Tibial artery (tissue), 4 donors: ENCODE measurements at regions of chr10 and their contacts with region 1.

Region 1: GRCh38 chr10:71812016-71812912 is 38.8 kb downstream of the PSAP start:
- DNase-seq: peak in 1 of 2 donors; percentile 77
- H3K4me3 ChIP-seq: no peak overlapping the region
- H3K27ac ChIP-seq: no peak overlapping the region
- H3K4me1 ChIP-seq: no peaks in the 10 kb centered on the region
- H3K27me3 ChIP-seq: peaks cover 0 to 5% of the 10 kb centered on the region in 2 donors
- CTCF ChIP-seq: peak; percentile 87

Region 2: DNA sequence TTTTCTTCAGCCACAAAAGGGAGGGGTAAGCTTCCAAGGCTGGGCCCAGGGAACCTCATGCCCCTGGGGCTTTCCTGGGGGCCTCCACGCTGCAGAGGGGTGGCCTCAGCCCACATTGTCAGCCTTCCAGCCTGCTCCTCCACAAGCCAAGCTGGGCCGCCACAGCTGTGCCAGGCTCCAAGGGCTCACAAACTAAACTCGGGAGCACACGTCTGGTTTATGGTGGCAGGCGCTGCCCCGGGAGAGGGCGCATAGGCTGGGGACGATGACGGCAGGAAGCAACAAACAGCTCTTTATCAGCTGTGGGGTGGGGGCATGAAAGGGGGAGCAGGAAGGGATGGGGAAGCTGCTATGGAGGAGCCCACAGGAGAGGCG is 421.8 kb before region 1 on chr10:
- intact Hi-C with region 1: loop called (anchors 5 kb)
- DNase-seq: no peak
- H3K4me3 ChIP-seq: no peak overlapping the region
- H3K27ac ChIP-seq: no peak overlapping the region
- H3K4me1 ChIP-seq: no peaks in the 10 kb centered on the region
- H3K27me3 ChIP-seq: peaks cover 0 to 24% of the 10 kb centered on the region in 2 donors
- CTCF ChIP-seq: no peak

Region 3: GRCh38 chr10:71696628-71697326 is 115.5 kb before region 1 on chr10:
- intact Hi-C with region 1: loop called (anchors 5 kb)
- DNase-seq: peak in 1 of 2 donors; percentile 48
- H3K4me3 ChIP-seq: no peak overlapping the region
- H3K27ac ChIP-seq: no peak overlapping the region
- H3K4me1 ChIP-seq: no peaks in the 10 kb centered on the region
- H3K27me3 ChIP-seq: peaks cover 0 to 9% of the 10 kb centered on the region in 2 donors
- CTCF ChIP-seq: peak; percentile 62 to 77

Region 4: GRCh38 chr10:71727738-71728737 is 84.2 kb before region 1 on chr10:
- intact Hi-C with region 1: no loop called
- DNase-seq: peak in 1 of 2 donors; percentile 61
- H3K4me3 ChIP-seq: no peak overlapping the region
- H3K27ac ChIP-seq: peak overlapping the region; percentile 55 to 69
- H3K4me1 ChIP-seq: peaks cover 0 to 35% (median 27%) of the 10 kb centered on the region in 4 donors
- H3K27me3 ChIP-seq: no peaks in the 10 kb centered on the region
- CTCF ChIP-seq: no peak